ENCODE measurements at regions of chr9 and their contacts with region 1.

Region 1: GRCh38 chr9:90801583-90802289 is at the start of gene SYK:
- DNase-seq: peak; percentile 82
- H3K4me3 ChIP-seq: peak within 1 kb of the TSS; percentile 91
- H3K27ac ChIP-seq: peak within 1 kb of the TSS; percentile 95
- H3K4me1 ChIP-seq: peaks cover 50% of the 10 kb centered on the region
- CTCF ChIP-seq: no peak
- total RNA-seq, gene SYK: 106 and 112 TPM in 2 replicates

Region 2: GRCh38 chr9:89743573-89744361 is 1058.0 kb before region 1 on chr9:
- CTCF ChIA-PET with region 1: no interaction called
- POLR2A ChIA-PET with region 1: interaction called, 3 read pairs
- intact Hi-C with region 1: loop called (anchors 10 kb)
- DNase-seq: peak; percentile 78
- H3K4me3 ChIP-seq: peak overlapping the region; percentile 24
- H3K27ac ChIP-seq: peak overlapping the region; percentile 93
- H3K4me1 ChIP-seq: peaks cover 80% of the 10 kb centered on the region
- CTCF ChIP-seq: no peak

Region 3: GRCh38 chr9:90789862-90790261 is 11.9 kb before region 1 on chr9:
- CTCF ChIA-PET with region 1: no interaction called
- POLR2A ChIA-PET with region 1: interaction called, 10 read pairs
- intact Hi-C with region 1: no loop called
- DNase-seq: no peak
- H3K4me3 ChIP-seq: no peak overlapping the region
- H3K27ac ChIP-seq: no peak overlapping the region
- H3K4me1 ChIP-seq: peaks cover 21% of the 10 kb centered on the region
- CTCF ChIP-seq: no peak

Region 4: DNA sequence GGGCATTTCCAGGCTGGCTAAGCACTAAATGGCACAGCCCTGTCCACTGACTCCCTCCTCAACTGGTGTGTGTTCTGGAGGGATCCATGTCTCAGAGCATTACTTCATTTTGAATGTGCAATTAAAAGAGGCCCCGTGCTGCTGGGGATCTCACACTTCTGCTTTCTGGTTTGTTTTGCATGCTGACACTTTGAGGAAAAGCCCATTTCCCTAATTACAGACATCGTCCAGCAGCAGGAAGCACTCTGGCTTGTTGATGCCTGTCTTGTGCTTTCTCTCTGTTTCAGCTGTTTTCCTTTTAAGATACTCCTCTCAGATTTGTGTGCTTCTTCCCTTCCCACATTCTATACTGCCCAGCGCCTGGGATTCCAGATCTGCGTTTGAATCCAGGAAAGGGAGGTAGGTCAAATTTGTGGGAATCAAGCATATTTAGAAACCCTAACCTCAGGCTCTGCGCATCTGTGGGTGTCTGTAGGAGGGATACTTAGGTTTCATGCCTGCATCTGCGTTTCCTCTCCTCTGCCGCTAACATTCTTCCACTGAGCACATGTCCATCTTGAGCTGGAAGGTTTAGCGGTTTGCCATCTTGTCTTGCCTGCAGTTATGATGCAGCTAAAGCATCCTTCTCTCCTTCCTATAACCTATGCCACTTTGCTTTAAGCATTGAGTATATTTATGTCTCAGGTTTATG is 25.6 kb after region 1 on chr9:
- CTCF ChIA-PET with region 1: interaction called, 9 read pairs
- POLR2A ChIA-PET with region 1: interaction called, 30 read pairs
- intact Hi-C with region 1: loop called (anchors 1 kb)
- DNase-seq: peak; percentile 91
- H3K4me3 ChIP-seq: peak overlapping the region; percentile 73
- H3K27ac ChIP-seq: peak overlapping the region; percentile 91
- H3K4me1 ChIP-seq: peaks cover 67% of the 10 kb centered on the region
- CTCF ChIP-seq: no peak

Measured in OCI-LY7 (cell line).